Esophagus squamous epithelium (tissue), 5 donors: ENCODE measurements at regions of chr9 and their contacts with region 1.

Region 1: GRCh38 chr9:133044661-133045060 is 13.9 kb downstream of the GTF3C5 start:
- DNase-seq: no peak
- H3K4me3 ChIP-seq: no peak overlapping the region
- H3K27ac ChIP-seq: no peak overlapping the region
- H3K4me1 ChIP-seq: no peaks in the 10 kb centered on the region
- H3K27me3 ChIP-seq: no peaks in the 10 kb centered on the region
- CTCF ChIP-seq: no peak
- POLR2A ChIP-seq: no peak

Region 2: GRCh38 chr9:133149126-133150107 is 104.8 kb after region 1 on chr9:
- intact Hi-C with region 1: loop called (anchors 5 kb)
- DNase-seq: peak; percentile 53
- H3K4me3 ChIP-seq: peak overlapping the region; percentile 71 to 91 (median 76)
- H3K27ac ChIP-seq: peak overlapping the region; percentile 96 to 97 (median 97)
- H3K4me1 ChIP-seq: peaks cover 29 to 74% (median 30%) of the 10 kb centered on the region in 3 donors
- H3K27me3 ChIP-seq: no peaks in the 10 kb centered on the region
- CTCF ChIP-seq: peak in 5 of 6 experiments; percentile 10 to 51 (median 43)
- POLR2A ChIP-seq: peak in 2 of 4 donors; percentile 36 to 62

Region 3: GRCh38 chr9:133429641-133430161 is 385.0 kb after region 1 on chr9:
- intact Hi-C with region 1: no loop called
- DNase-seq: no peak
- H3K4me3 ChIP-seq: no peak overlapping the region
- H3K27ac ChIP-seq: no peak overlapping the region
- H3K4me1 ChIP-seq: peaks cover 0 to 23% (median 9%) of the 10 kb centered on the region in 3 donors
- H3K27me3 ChIP-seq: peaks cover 0 to 49% (median 2%) of the 10 kb centered on the region in 4 donors
- CTCF ChIP-seq: peak in 3 of 6 experiments; percentile 11 to 16 (median 14)
- POLR2A ChIP-seq: no peak